ENCODE measurements at regions of chr2 and their contacts with region 1.

Region 1: DNA sequence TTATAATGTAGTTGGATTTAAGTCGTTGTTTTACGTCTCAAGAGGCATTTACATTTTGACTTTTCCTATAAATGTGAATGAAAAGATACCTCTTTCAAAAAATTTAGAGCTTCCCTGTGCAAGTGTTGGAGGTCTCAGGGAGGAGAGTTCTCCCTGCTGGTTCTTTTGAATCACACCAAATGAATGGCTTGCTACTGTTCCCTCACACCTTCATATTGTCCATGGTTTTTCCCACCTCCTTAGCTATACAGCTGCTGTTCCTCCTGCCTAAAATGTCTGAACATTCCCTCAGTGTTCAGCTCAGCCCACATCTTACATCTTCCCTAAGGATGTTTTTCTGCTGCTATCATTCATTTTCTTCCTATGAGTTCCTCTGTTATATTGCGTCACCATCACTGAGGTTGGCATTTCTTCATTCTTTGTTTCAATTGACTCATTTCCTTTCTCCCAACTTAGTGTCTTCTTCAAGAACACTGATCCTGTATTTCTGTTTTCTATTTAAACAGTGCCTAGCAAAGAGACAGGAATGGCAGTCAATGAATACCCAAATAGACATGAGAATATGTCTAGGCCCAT is 46.0 kb downstream of the COX7A2L start:
- DNase-seq: peak; percentile 12

Region 2: GRCh38 chr2:41869542-41870264 is 445.3 kb before region 1 on chr2:
- in situ Hi-C with region 1: loop called (anchors 25 kb)
- DNase-seq: peak; percentile 79

Measured in KBM-7 (cell line).